ENCODE measurements at regions of chr2 and their contacts with region 1.

Region 1: GRCh38 chr2:64914735-64915509 is 74.3 kb upstream of the SLC1A4 start:
- DNase-seq: no peak
- ATAC-seq: no peak
- H3K4me3 ChIP-seq: no peak overlapping the region
- H3K27ac ChIP-seq: no peak overlapping the region
- H3K4me1 ChIP-seq: peaks cover 6% of the 10 kb centered on the region; the same call in 1 of the 2 replicates
- H3K27me3 ChIP-seq: 0 out of 5 replicates have a peak, but pooled peaks cover 0 to 4% of the 10 kb centered on the region in 2 experiments
- CTCF ChIP-seq: no peak
- EP300 ChIP-seq: no peak
- POLR2A ChIP-seq: no peak
- RAD21 ChIP-seq: no peak

Region 2: GRCh38 chr2:64904413-64905329 is 10.3 kb before region 1 on chr2:
- CTCF ChIA-PET with region 1: no interaction called
- POLR2A ChIA-PET with region 1: no interaction called
- in situ Hi-C with region 1: no loop called
- intact Hi-C with region 1: no loop called
- DNase-seq: peak; percentile 26
- ATAC-seq: peak; percentile 56
- H3K4me3 ChIP-seq: peak overlapping the region in 2 of 3 experiments; percentile 32 to 53; a peak in 4 of 6 replicates
- H3K27ac ChIP-seq: no peak overlapping the region
- H3K4me1 ChIP-seq: peaks cover 35% of the 10 kb centered on the region
- H3K27me3 ChIP-seq: peaks cover 1 to 10% of the 10 kb centered on the region in 2 experiments; a peak in 2 of 5 replicates
- CTCF ChIP-seq: no peak
- EP300 ChIP-seq: no peak
- POLR2A ChIP-seq: no peak
- RAD21 ChIP-seq: no peak

Region 3: GRCh38 chr2:65033178-65033577 is 118.3 kb after region 1 on chr2:
- CTCF ChIA-PET with region 1: interaction called, 11 read pairs
- POLR2A ChIA-PET with region 1: interaction called, 5 read pairs
- in situ Hi-C with region 1: no loop called
- intact Hi-C with region 1: loop called (anchors 1 kb)
- DNase-seq: peak; percentile 25
- ATAC-seq: no peak
- H3K4me3 ChIP-seq: no peak overlapping the region
- H3K27ac ChIP-seq: no peak overlapping the region
- H3K4me1 ChIP-seq: peaks cover 28% of the 10 kb centered on the region
- H3K27me3 ChIP-seq: no peaks in the 10 kb centered on the region
- CTCF ChIP-seq: peak; percentile 40; the same call in 1 of the 2 replicates
- EP300 ChIP-seq: no peak
- POLR2A ChIP-seq: no peak
- RAD21 ChIP-seq: no peak

Region 4: GRCh38 chr2:65040400-65041261 is 125.7 kb after region 1 on chr2:
- CTCF ChIA-PET with region 1: interaction called, 65 read pairs
- POLR2A ChIA-PET with region 1: interaction called, 5 read pairs
- in situ Hi-C with region 1: loop called (anchors 5 kb)
- intact Hi-C with region 1: loop called (anchors 1 kb)
- DNase-seq: peak; percentile 83
- ATAC-seq: peak; percentile 98
- H3K4me3 ChIP-seq: no peak overlapping the region
- H3K27ac ChIP-seq: no peak overlapping the region
- H3K4me1 ChIP-seq: peaks cover 13% of the 10 kb centered on the region
- H3K27me3 ChIP-seq: no peaks in the 10 kb centered on the region
- CTCF ChIP-seq: peak; percentile 97
- EP300 ChIP-seq: no peak
- POLR2A ChIP-seq: no peak
- RAD21 ChIP-seq: peak; percentile 92

Region 5: DNA sequence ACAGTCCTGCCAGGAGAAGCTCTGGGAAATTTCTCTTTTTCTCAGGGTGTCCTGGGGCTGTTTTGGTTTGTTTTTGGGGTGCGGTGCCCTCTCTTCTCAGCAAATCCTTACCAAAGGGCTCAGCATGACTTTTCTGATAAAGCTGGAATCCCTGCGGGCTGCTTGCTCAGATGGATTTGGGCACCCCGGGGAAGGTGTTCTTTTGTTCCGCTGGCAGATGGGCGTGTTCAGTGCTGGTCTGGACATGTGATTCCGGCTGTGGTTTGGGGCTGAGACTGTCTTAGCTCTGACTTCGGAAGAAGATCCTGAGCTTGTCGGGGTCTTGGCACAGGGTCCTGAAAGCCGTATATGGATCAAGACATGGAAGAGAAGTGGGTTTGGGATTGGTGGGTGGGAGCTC is 651.7 kb after region 1 on chr2:
- CTCF ChIA-PET with region 1: no interaction called
- POLR2A ChIA-PET with region 1: no interaction called
- in situ Hi-C with region 1: loop called (anchors 10 kb)
- intact Hi-C with region 1: no loop called
- DNase-seq: no peak
- ATAC-seq: no peak
- H3K4me3 ChIP-seq: no peak overlapping the region
- H3K27ac ChIP-seq: no peak overlapping the region
- H3K4me1 ChIP-seq: 0 out of 2 replicates have a peak, but pooled peaks cover 4% of the 10 kb centered on the region
- H3K27me3 ChIP-seq: peaks cover 1 to 36% of the 10 kb centered on the region in 2 experiments; a peak in 3 of 5 replicates
- CTCF ChIP-seq: no peak
- EP300 ChIP-seq: no peak
- POLR2A ChIP-seq: no peak
- RAD21 ChIP-seq: no peak

Region 6: GRCh38 chr2:65576861-65577601 is 662.1 kb after region 1 on chr2:
- CTCF ChIA-PET with region 1: interaction called, 10 read pairs
- POLR2A ChIA-PET with region 1: no interaction called
- in situ Hi-C with region 1: no loop called
- intact Hi-C with region 1: loop called (anchors 1 kb)
- DNase-seq: peak; percentile 91
- ATAC-seq: peak; percentile 91
- H3K4me3 ChIP-seq: peak overlapping the region in 2 of 3 experiments; percentile 13 to 23; a peak in 1 of 6 replicates
- H3K27ac ChIP-seq: no peak overlapping the region
- H3K4me1 ChIP-seq: peaks cover 19% of the 10 kb centered on the region
- H3K27me3 ChIP-seq: no peaks in the 10 kb centered on the region
- CTCF ChIP-seq: no peak
- EP300 ChIP-seq: peak in 1 of 2 experiments; percentile 74; a peak in 1 of 4 replicates
- POLR2A ChIP-seq: no peak
- RAD21 ChIP-seq: no peak

Measured in HepG2 (cell line).